ENCODE measurements at regions of chr12 and their contacts with region 1.

Region 1: DNA sequence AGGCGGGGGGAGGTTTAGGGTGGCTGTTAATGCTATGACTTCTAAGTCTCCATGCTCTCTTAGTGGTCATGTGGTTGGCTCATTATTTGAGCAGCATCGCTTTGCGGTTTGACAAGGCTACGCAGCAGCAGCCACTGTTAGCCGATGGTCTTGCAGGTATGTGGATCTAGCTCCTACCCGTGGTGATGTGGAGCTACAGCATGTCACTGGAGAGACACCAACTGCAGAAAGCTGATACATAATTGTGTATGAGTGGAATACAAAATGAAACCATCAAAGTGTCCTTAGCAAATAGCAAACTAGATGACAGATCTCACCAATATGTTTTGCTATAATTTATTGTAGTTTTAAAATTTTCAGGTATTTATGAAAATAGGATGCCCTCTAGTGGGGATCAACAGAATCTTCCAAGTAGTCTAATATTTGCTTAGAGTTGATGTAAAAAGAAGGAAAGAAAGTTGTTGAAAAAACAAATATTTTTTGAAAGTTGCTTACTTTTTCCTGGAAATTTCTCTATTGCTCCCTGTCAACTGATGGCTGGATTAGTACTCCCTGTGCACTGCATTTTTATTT is 94.9 kb downstream of the NAV3 start:
- DNase-seq: peak; percentile 62 to 64
- H3K4me3 ChIP-seq: no peak overlapping the region
- H3K27ac ChIP-seq: no peak overlapping the region
- H3K4me1 ChIP-seq: no peaks in the 10 kb centered on the region
- H3K27me3 ChIP-seq: no peaks in the 10 kb centered on the region
- CTCF ChIP-seq: peak; percentile 98

Region 2: GRCh38 chr12:77049767-77050353 is 875.8 kb before region 1 on chr12:
- CTCF ChIA-PET with region 1: interaction called, 12 read pairs
- POLR2A ChIA-PET with region 1: no interaction called
- intact Hi-C with region 1: no loop called
- DNase-seq: peak in 1 of 2 experiments; percentile 56
- H3K4me3 ChIP-seq: no peak overlapping the region
- H3K27ac ChIP-seq: no peak overlapping the region
- H3K4me1 ChIP-seq: no peaks in the 10 kb centered on the region
- H3K27me3 ChIP-seq: no peaks in the 10 kb centered on the region
- CTCF ChIP-seq: peak; percentile 87

Region 3: DNA sequence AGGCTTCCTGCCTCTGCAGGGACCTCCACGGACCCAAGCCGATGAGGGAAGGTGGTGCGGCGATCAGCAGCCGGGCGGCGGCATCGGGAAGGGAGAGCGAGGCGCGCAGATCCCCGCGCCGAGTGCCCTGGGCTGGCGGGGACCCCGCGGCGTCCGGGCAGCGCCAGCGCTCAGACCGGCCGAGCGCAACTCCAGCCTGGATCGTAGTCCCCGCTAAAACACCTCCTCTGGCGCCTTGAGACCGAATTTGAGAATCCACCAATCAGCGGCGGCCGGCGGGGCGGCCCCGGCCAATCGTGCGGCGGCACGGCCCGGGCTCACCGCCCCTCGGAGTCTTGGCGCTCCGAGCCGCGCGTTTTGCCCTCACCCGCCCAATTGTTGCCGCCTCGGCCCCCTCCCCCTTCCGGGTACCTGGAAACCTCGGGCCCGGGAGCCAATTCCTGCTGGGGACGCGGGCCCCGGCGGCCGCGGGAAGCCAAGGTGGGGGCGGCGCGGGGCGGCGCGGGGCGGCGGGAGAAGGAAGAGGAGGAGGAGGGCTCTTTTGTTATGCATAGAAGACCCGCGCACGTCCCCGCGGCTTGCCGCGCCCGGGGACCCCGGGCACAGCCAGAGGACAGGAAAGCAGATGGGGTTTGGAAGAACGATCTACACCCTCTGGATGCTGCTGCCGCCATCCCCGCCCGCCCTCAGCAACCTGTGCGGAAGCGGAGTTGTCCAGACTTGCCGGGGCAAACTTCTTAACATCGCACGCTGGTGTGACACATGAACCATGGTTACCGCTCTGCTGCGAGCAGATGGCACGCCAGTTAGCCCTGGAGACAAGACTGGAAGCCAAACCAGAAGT is 860.0 kb before region 1 on chr12 and contains the start of gene E2F7:
- CTCF ChIA-PET with region 1: no interaction called
- POLR2A ChIA-PET with region 1: no interaction called
- intact Hi-C with region 1: loop called (anchors 5 kb)
- DNase-seq: peak; percentile 80 to 95
- H3K4me3 ChIP-seq: peak within 1 kb of the TSS; percentile 93
- H3K27ac ChIP-seq: peak within 1 kb of the TSS; percentile 27; the same call in 1 of the 2 replicates
- H3K4me1 ChIP-seq: peaks cover 19% of the 10 kb centered on the region
- H3K27me3 ChIP-seq: no peaks in the 10 kb centered on the region
- CTCF ChIP-seq: no peak
- total RNA-seq, gene E2F7: 9.8 and 14.6 TPM in 2 replicates

Region 4: DNA sequence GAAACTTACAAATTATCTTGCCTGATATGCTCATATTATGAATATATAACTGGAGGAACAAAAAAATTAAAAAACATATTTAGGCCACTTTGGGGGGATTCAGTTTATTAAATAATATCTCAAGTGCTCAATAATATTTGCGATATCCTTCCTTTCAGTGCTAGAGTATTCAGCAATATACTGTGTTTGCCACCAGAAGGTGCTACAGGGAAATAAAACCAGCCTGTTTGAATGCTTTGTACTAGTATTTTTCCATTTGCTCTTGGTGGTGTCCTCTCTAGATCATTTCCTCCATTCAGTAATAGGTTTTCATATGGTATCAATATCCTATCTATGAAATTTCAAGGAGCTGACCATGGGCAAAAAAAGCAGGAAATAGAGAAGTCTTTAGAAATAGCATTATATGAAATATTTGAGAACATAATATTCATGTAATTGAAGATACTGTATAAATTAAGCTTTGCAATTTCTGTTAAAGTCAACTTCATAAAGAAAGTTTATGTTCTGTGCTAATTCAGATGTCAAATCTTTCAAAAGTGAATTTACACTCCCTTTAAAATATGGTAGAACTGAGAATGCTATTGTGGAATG is 201.2 kb before region 1 on chr12:
- CTCF ChIA-PET with region 1: interaction called, 26 read pairs
- POLR2A ChIA-PET with region 1: no interaction called
- intact Hi-C with region 1: loop called (anchors 1 kb)
- DNase-seq: no peak
- H3K4me3 ChIP-seq: no peak overlapping the region
- H3K27ac ChIP-seq: no peak overlapping the region
- H3K4me1 ChIP-seq: no peaks in the 10 kb centered on the region
- H3K27me3 ChIP-seq: no peaks in the 10 kb centered on the region
- CTCF ChIP-seq: peak; percentile 70

Region 5: GRCh38 chr12:77940011-77940423 is 14.4 kb after region 1 on chr12:
- CTCF ChIA-PET with region 1: interaction called, 14 read pairs
- POLR2A ChIA-PET with region 1: interaction called, 6 read pairs
- intact Hi-C with region 1: no loop called
- DNase-seq: peak; percentile 27 to 74
- H3K4me3 ChIP-seq: no peak overlapping the region
- H3K27ac ChIP-seq: peak overlapping the region; percentile 88
- H3K4me1 ChIP-seq: peaks cover 25% of the 10 kb centered on the region
- H3K27me3 ChIP-seq: no peaks in the 10 kb centered on the region
- CTCF ChIP-seq: no peak

Region 6: GRCh38 chr12:79238246-79238645 is 1312.6 kb after region 1 on chr12:
- CTCF ChIA-PET with region 1: interaction called, 16 read pairs
- POLR2A ChIA-PET with region 1: no interaction called
- intact Hi-C with region 1: no loop called
- DNase-seq: no peak
- H3K4me3 ChIP-seq: no peak overlapping the region
- H3K27ac ChIP-seq: no peak overlapping the region
- H3K4me1 ChIP-seq: no peaks in the 10 kb centered on the region
- H3K27me3 ChIP-seq: no peaks in the 10 kb centered on the region
- CTCF ChIP-seq: no peak

Measured in PC-9 (cell line).